GM10248 (cell line): ENCODE measurements at regions of chr1 and their contacts with region 1.

Region 1: DNA sequence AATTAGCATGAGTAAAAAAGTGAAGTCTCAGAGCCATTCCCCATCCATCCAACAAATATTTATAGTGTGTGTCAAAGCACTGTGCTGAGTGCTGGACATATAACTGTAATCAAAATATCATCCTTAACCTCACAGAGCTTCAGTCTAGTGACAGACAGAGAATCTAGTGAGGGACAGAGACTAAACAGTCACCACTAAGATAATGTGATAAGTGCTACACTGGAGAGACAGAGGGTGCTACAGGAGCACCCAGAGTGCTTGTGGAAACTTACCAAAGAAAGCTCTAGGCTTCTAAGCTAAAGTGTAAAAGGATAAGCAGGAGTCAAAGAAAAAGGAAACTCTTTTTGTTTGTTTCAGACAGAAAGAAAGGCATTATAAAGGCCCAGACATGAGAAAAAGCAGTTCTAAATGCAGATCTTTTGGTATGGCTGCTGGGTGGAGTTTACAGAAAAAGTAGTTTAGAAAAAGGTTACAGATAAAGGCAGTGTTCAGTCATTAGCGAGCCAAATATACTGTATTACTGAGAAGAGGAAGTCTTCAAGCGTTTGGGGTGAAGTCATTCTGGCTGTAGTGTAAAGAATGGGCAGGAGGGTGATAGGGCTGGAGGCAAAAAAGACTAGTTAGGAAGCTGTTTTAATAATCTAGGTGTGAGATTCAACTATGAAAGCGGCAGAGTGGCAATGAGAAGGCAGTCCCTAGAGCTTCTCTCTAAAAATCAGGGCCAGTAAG is 83.8 kb downstream of the SCMH1 start:
- DNase-seq: no peak
- CTCF ChIP-seq: peak; percentile 7

Region 2: DNA sequence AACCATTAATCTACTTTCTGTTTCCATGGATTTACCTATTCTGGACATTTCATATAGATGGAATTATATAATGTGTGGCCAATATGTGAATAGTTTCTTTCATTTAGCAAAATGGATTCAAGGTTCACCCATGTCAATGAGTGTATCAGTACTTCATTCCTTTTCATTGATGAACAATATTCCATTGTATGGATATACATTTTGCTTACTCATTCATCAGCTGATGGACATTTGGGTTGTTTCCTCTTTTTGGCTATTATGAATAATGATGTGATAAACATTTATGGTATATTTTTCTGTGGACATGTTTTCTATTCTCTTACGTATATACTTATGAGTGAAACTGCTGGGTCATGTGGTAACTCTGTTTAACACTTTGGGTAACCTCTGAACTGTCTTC is 14.0 kb before region 1 on chr1:
- CTCF ChIA-PET with region 1: interaction called, 14 read pairs
- POLR2A ChIA-PET with region 1: no interaction called
- DNase-seq: no peak
- CTCF ChIP-seq: no peak

Region 3: DNA sequence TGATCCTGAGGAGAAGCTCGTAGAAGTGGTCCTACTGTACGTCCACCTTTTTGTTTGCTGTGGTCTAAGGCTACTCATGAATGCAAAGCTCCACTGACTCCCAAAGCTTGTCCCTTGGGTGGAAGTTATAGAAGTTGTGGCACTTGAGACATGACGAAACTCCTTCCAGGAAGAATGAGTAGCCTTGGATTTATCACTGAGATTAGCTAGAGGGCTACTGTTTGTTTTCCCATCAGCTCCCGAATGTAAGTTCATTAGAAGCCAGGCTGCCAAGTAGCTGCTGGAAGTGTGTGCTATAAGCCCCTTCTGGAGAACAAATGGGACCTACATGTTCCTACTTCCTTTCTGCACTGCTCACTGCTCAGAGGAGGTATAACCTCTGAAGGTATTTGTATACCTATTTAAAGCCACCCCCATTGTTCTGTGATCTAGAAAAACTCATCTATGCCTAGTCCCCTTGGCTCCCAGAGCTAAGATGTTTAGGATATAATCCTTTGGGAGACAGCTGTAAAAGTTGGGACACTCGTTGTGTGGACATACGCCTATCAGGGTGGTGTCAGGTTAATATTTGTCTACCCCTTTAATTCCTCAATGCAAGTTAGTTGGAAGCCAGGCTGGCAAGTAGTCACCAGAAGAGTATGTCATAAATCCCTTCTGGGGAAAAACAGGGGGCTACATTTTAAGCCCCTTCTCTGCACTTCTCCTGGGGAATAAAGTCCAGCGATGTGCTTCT is 10.9 kb after region 1 on chr1:
- CTCF ChIA-PET with region 1: interaction called, 12 read pairs
- POLR2A ChIA-PET with region 1: no interaction called
- DNase-seq: no peak
- CTCF ChIP-seq: no peak

Region 4: GRCh38 chr1:41353726-41354125 is 195.4 kb after region 1 on chr1:
- CTCF ChIA-PET with region 1: no interaction called
- POLR2A ChIA-PET with region 1: no interaction called
- DNase-seq: peak; percentile 55
- CTCF ChIP-seq: no peak